ENCODE measurements at regions of chr11 and their contacts with region 1.

Region 1: DNA sequence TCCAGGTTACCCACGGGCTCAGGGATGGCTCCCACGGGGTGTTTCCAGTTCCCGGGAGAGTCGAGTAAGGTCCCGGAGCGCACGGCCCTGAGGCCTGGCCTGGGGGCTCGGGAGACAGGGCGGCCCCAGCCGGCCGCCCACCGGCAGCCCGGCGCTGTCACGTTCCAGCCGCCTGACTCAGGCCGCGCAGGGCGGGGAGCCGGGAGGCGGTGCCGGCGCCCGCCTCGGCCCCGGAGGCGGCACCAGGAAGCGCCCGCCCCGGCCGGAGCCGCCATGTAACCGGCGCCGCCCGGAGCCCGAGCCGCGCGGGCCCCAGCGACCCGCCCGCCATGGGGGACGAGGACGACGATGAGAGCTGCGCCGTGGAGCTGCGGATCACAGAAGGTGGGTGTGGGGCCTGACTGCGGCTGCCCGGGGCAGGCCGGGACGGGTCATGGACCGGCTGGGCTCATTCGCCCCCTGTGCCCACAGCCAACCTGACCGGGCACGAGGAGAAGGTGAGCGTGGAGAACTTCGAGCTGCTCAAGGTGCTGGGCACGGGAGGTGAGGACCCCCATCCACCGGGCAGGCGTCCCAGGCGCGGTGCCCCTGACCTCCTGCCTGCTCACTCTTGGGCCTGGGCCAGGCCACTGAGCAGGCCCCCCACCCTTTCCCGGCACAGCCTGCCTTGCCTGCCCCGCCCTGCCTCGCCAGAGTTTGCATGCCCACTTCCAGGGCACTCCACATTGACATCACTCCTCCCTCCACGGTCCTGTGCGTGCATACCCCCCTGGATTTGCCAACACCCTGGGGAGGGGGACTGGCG is at the start of gene RPS6KA4:
- DNase-seq: peak; percentile 65 to 82
- H3K4me3 ChIP-seq: peak within 1 kb of the TSS; percentile 99
- H3K4me3 Mint-ChIP-seq: peak within 1 kb of the TSS; percentile 99
- H3K27ac Mint-ChIP-seq: peak within 1 kb of the TSS; percentile 86
- H3K4me1 ChIP-seq: peaks cover 46% of the 10 kb centered on the region
- H3K4me1 Mint-ChIP-seq: peaks cover 29% of the 10 kb centered on the region
- H3K27me3 ChIP-seq: no peaks in the 10 kb centered on the region
- H3K27me3 Mint-ChIP-seq: no peaks in the 10 kb centered on the region
- CTCF ChIP-seq: no peak
- total RNA-seq, gene RPS6KA4: 95.7 and 98.6 TPM in 2 replicates

Region 2: DNA sequence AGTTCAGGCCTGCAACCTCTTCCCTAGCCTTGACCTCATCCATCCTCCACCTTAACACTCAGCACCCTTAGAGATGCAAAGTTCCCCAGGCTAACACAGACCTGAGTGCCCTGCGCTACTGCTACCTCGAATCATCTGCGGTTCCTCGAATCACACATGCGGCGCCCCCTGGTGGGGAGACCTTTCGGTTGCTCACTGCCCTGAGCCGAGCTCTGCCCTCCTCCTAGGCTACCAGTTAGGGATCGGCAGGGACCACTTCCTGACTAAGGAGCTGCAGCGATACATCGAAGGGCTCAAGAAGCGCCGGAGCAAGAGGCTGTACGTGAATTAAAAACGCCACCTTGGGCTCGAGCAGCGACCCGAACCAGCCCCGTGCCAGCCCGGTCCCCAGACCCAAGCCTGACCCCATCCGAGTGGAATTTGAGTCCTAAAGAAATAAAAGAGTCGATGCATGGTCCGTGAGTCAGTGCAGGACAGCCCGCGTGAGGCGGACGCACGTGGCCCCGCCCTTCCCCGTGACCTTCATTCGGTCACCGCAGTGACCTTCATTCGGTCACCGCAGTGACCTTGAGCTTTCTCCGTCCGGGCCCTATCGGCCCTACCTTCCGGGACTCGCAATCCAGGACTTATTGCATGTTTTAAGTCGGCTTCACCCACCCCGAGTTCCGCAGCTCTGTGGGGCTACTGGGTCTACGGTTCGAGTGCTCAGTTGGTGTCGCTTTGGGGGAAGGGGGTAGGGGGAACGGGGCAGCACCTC is 54.6 kb before region 1 on chr11:
- CTCF ChIA-PET with region 1: interaction called, 36 read pairs
- POLR2A ChIA-PET with region 1: interaction called, 6 read pairs
- intact Hi-C with region 1: no loop called
- DNase-seq: peak; percentile 93 to 95
- H3K4me3 ChIP-seq: peak overlapping the region; percentile 65
- H3K4me3 Mint-ChIP-seq: peak overlapping the region; percentile 97
- H3K27ac Mint-ChIP-seq: peak overlapping the region; percentile 99
- H3K4me1 ChIP-seq: peaks cover 28% of the 10 kb centered on the region
- H3K4me1 Mint-ChIP-seq: peaks cover 9% of the 10 kb centered on the region
- H3K27me3 ChIP-seq: no peaks in the 10 kb centered on the region
- H3K27me3 Mint-ChIP-seq: no peaks in the 10 kb centered on the region
- CTCF ChIP-seq: peak; percentile 87 to 97

Region 3: GRCh38 chr11:64331557-64332371 is 27.3 kb before region 1 on chr11:
- CTCF ChIA-PET with region 1: interaction called, 16 read pairs
- POLR2A ChIA-PET with region 1: interaction called, 3 read pairs
- intact Hi-C with region 1: no loop called
- DNase-seq: peak; percentile 42 to 55
- H3K4me3 ChIP-seq: no peak overlapping the region
- H3K4me3 Mint-ChIP-seq: no peak overlapping the region
- H3K27ac Mint-ChIP-seq: no peak overlapping the region
- H3K4me1 ChIP-seq: peaks cover 5% of the 10 kb centered on the region; the same call in 1 of the 2 replicates
- H3K4me1 Mint-ChIP-seq: peaks cover 12% of the 10 kb centered on the region
- H3K27me3 ChIP-seq: no peaks in the 10 kb centered on the region
- H3K27me3 Mint-ChIP-seq: no peaks in the 10 kb centered on the region
- CTCF ChIP-seq: peak; percentile 17 to 20

Region 4: GRCh38 chr11:64372802-64373597 is 13.9 kb after region 1 on chr11:
- CTCF ChIA-PET with region 1: interaction called, 26 read pairs
- POLR2A ChIA-PET with region 1: no interaction called
- intact Hi-C with region 1: no loop called
- DNase-seq: peak; percentile 94 to 97
- H3K4me3 ChIP-seq: peak overlapping the region; percentile 42
- H3K4me3 Mint-ChIP-seq: peak overlapping the region; percentile 88
- H3K27ac Mint-ChIP-seq: peak overlapping the region; percentile 88
- H3K4me1 ChIP-seq: 0 out of 2 replicates have a peak, but pooled peaks cover 3% of the 10 kb centered on the region
- H3K4me1 Mint-ChIP-seq: peaks cover 7% of the 10 kb centered on the region
- H3K27me3 ChIP-seq: no peaks in the 10 kb centered on the region
- H3K27me3 Mint-ChIP-seq: no peaks in the 10 kb centered on the region
- CTCF ChIP-seq: no peak

Region 5: DNA sequence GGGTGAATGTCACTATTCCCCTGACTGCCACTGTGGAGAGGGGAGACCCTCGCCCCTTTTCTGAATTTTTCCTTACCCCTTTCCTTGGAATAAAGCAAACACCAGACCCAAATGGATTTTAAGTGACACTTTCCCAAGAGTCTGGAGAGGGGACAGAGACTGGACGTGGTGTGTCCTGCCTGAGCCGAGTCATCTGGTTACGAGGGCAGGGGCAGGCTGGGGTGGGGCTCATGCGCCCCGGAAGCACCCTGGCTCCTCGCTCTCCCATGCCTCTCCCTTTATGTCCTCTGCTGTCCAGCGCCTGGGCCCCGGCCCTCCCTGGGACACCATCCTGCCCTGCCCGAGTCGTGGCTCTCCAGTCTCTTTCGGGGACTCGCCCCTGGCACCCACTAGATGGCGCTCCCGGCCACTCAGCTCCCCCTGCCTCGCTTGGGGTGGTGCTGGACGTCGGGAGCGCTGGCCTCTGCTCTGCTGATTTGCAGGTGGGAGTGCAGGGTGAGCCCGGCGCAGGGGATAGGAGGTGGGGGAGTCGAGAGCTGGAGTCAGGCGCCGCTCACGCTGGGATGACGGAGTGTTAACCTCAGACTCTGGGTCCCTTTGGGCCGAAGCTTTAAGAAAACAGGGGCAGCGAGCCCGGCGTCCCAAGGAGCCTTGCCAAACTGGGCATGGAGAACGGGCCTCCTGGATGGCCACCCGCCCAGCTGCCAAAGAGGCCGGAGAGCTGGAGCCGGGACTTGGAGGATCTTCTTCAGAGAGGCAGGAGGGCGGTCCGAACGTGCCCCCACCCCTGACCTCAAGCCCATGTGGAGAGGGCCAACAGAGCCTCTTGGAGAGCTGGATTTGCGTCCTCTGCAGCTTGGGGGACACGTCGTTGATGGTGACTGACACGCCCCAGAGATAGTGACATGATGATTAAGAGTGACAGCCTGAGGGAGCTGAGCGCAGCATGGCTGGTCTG is 89.8 kb after region 1 on chr11:
- CTCF ChIA-PET with region 1: interaction called, 51 read pairs
- POLR2A ChIA-PET with region 1: no interaction called
- intact Hi-C with region 1: loop called (anchors 2 kb)
- DNase-seq: peak; percentile 90 to 92
- H3K4me3 ChIP-seq: peak overlapping the region; percentile 53
- H3K4me3 Mint-ChIP-seq: peak overlapping the region; percentile 89
- H3K27ac Mint-ChIP-seq: peak overlapping the region; percentile 67
- H3K4me1 ChIP-seq: peaks cover 17% of the 10 kb centered on the region
- H3K4me1 Mint-ChIP-seq: peaks cover 20% of the 10 kb centered on the region
- H3K27me3 ChIP-seq: no peaks in the 10 kb centered on the region; the same call in 1 of the 2 replicates
- H3K27me3 Mint-ChIP-seq: no peaks in the 10 kb centered on the region
- CTCF ChIP-seq: peak; percentile 88 to 97

Measured in Caco-2 (cell line).